RWPE1 (cell line): ENCODE measurements at regions of chr9 and their contacts with region 1.

Region 1: GRCh38 chr9:127869310-127870152 is 7.9 kb downstream of the AK1 start:
- DNase-seq: peak; percentile 95
- H3K27ac ChIP-seq: peak overlapping the region; percentile 87
- CTCF ChIP-seq: peak; percentile 98

Region 2: GRCh38 chr9:127049044-127049443 is 820.5 kb before region 1 on chr9:
- CTCF ChIA-PET with region 1: no interaction called
- POLR2A ChIA-PET with region 1: no interaction called
- DNase-seq: peak; percentile 89
- H3K27ac ChIP-seq: peak overlapping the region; percentile 22; the same call in 1 of the 2 replicates
- CTCF ChIP-seq: no peak; the same call in 1 of the 2 replicates

Region 3: DNA sequence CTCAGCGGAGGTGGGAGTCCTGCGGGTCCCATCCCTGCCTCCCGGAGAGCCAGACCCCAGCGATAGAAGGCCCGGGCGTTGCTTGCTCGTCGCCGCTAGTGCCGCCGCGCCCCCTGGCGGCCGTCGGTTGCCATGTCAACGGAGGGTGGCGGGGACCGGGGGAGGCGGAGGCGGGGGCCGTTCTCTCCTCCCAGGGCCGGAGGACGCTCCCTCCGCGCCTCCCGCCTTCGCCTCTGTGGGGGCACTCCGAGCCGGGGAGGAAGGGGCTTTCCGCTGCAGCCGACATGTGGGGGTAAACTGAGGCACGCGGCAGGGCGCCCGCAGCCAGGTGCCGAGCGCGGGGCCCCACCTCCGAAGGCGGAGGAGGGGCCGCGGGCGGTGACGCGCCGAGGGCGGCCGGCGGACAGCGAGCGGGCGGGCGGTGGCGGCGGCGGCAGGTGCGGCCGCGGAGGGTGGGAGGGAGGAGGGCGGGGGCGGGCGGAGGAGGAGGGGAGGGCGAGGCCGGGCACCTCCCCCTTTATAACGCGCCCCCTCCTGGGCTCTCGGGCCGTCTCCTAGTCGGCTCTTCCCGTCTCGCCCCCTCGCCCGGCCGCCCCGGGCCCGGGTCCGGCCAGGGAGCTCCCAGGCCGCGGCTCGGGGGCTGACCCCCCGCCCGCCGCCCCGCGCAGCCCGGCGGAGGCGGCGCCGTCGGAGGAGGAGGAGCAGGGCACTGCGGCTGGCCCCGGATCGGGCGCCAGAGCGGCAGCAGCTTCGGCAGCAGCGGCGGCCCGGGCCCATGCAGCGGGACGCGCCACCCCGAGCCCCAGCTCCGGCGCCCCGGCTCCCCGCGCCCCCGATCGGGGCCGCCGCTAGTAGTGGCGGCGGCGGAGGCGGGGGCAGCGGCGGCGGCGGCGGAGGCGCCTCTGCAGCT is 84.3 kb before region 1 on chr9:
- CTCF ChIA-PET with region 1: interaction called, 18 read pairs
- POLR2A ChIA-PET with region 1: interaction called, 4 read pairs
- DNase-seq: peak; percentile 97
- H3K27ac ChIP-seq: peak overlapping the region; percentile 93
- CTCF ChIP-seq: peak; percentile 98

Region 4: DNA sequence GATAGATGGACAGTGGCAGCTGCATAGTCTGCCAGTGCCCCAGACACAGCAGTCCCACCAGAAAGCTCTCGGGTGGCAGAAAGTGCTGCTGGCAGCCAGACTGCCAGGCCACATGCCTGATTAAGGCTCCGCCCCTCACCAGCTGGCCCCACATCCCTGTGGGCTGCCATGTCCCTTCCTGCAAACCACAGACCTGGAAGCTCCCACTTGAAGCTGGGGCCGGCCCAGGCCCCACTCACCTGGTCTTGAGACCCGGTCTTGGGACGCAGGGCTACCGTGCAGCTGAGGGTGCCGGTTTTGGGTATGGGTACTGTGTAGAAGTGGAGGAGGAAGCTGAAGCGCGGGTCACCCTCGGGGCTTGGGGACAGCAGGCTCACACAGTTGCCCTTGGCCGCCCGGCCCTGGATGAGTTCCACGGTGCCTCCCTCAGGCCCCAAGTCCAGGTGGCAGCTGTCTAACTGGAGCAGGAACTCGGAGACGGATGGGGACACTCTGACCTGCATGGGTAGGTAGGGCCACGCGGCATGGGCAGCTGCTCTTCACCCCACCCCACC is 51.6 kb before region 1 on chr9:
- CTCF ChIA-PET with region 1: interaction called, 10 read pairs
- POLR2A ChIA-PET with region 1: no interaction called
- DNase-seq: no peak
- H3K27ac ChIP-seq: peak overlapping the region; percentile 68
- CTCF ChIP-seq: no peak

Region 5: DNA sequence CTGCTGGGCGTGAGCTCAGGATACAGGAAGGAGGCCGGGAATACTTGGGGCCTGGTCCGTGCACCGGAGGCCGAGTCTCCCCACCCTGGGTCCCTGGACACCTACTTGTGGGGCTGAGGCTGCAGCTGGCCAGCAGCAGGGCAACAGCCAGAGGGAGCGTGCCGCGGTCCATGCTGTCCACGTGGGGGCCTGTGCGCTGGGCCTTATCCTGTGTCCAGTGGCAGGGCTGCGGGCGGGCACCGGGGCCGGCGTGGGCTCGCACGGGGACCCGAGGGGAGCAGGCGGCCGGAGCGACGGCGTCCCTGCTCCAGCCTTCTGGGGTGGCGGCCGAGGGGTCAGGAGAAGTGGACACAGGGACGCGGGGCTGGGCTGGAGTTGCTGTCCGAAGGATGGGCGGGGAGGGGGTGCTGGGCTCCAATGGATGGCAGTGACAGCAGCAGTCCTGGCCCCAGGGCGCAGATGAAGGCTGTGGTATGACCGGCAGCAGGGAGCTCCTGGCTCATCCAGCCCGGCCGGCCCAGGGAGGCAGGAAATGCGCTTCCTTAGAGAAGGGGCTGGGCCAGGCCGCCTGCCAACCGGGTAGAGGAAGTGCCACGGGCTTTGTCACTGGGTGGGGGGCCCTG is 15.2 kb before region 1 on chr9 and contains the start of gene ENG:
- CTCF ChIA-PET with region 1: interaction called, 24 read pairs
- POLR2A ChIA-PET with region 1: no interaction called
- DNase-seq: peak; percentile 64
- H3K27ac ChIP-seq: peak within 1 kb of the TSS; percentile 71
- CTCF ChIP-seq: no peak

Region 6: DNA sequence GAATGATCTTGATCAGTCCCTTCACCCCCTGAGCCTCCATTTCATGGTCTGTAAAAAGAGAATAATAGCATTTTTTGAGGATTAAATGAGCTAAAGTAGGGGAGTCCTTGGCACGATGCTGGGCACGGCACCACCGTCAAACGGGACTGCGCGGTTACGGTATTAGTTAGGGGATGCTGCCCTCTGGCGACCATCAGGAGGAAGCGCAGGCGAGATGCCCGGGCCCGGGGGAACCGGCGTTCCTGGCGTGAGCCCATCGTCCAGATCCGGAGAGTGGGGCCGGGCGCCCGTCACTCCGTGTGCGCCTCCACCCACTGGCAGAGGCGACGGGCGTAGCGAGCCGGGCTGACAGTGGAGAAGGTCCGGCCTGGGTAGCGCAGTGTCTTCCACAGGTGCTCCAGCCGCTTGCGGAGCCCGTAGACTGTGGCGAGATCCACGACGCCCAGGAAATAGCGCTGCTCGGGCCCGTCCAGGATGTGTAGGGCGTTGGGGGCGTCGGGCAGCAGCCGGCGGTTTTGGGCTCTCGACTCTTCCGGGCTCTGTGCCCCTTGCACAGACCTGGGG is 52.1 kb after region 1 on chr9:
- CTCF ChIA-PET with region 1: interaction called, 13 read pairs
- POLR2A ChIA-PET with region 1: no interaction called
- DNase-seq: peak; percentile 92
- H3K27ac ChIP-seq: peak overlapping the region; percentile 97
- CTCF ChIP-seq: peak; percentile 99